CD8-positive, alpha-beta T cell (primary cell): ENCODE measurements at regions of chr19 and their contacts with region 1.

Region 1: GRCh38 chr19:52527134-52527955 is at the start of gene ZNF808:
- DNase-seq: peak; percentile 96 to 98 (median 97)
- ATAC-seq: peak; percentile 95
- H3K4me3 ChIP-seq: peak within 1 kb of the TSS; percentile 78 to 98
- H3K4me3 Mint-ChIP-seq: peak within 1 kb of the TSS; percentile 98
- H3K27ac ChIP-seq: peak within 1 kb of the TSS; percentile 89 to 97
- H3K27ac Mint-ChIP-seq: peak within 1 kb of the TSS; percentile 99
- H3K4me1 ChIP-seq: peaks cover 13% of the 10 kb centered on the region
- H3K4me1 Mint-ChIP-seq: peaks cover 29% of the 10 kb centered on the region
- H3K27me3 ChIP-seq: no peaks in the 10 kb centered on the region
- H3K27me3 Mint-ChIP-seq: no peaks in the 10 kb centered on the region
- CTCF ChIP-seq: peak; percentile 33
- total RNA-seq, gene ZNF808: 16.4 to 19.2 TPM

Region 2: DNA sequence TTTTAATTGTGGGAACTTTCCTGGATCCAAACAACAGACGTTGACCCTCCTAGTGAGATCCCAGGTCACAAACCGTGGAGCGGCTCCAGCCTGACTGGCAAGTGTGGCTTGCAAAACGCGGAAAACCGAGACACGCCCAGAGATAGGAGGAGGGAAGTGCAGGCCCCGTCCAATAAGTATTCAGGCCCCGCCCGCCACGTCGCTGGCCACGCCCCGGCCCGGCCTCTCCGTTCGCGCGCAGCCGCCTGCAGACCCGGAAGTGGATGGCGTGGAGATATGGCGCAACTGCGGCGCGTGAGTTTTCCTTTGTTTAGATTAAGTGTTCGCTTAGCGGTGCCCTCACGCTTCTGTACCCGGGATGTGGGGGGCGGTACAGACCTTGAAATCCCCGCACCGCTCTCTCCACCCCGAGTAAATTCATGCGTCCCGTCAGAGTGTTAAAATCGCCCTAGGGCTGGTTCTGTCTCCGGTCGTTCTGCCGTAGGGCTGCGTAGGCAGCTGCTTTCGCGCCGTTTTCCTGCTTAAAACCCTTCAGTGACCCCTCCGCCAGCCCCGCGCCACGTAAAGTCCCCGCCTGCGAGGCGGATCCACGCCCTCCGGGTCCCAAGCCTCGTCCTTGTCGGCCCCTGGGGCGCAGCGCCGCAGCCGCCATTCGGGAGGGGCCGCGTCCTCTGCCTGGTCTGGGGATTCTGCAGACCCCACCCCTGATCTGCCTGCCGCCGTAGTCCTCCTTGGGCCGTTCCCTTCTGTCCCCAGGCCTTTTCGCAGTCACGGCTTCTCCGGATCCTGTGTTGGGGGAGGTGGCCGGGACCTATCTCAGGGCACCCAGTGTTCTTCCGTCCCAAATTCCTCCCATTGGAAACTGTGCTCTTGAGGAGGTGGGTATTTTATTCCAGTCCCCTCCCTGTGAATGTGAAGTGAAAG is 257.7 kb before region 1 on chr19 and contains the start of gene ZNF766:
- CTCF ChIA-PET with region 1: no interaction called
- POLR2A ChIA-PET with region 1: no interaction called
- intact Hi-C with region 1: loop called (anchors 1 to 2 kb)
- DNase-seq: peak; percentile 95 to 98 (median 97)
- ATAC-seq: peak; percentile 98
- H3K4me3 ChIP-seq: peak within 1 kb of the TSS; percentile 89 to 95
- H3K4me3 Mint-ChIP-seq: peak within 1 kb of the TSS; percentile 98
- H3K27ac ChIP-seq: peak within 1 kb of the TSS; percentile 96
- H3K27ac Mint-ChIP-seq: peak within 1 kb of the TSS; percentile 98
- H3K4me1 ChIP-seq: peaks cover 13% of the 10 kb centered on the region
- H3K4me1 Mint-ChIP-seq: peaks cover 41% of the 10 kb centered on the region
- H3K27me3 ChIP-seq: no peaks in the 10 kb centered on the region
- H3K27me3 Mint-ChIP-seq: no peaks in the 10 kb centered on the region
- CTCF ChIP-seq: no peak
- total RNA-seq, gene ZNF766: 50.8 to 52.6 TPM

Region 3: GRCh38 chr19:52397310-52398080 is 129.8 kb before region 1 on chr19 and contains the start of gene ZNF528:
- CTCF ChIA-PET with region 1: no interaction called
- POLR2A ChIA-PET with region 1: no interaction called
- intact Hi-C with region 1: loop called in 1 of 2 experiments (anchors 1 kb)
- DNase-seq: peak; percentile 81 to 98 (median 95)
- ATAC-seq: peak; percentile 98
- H3K4me3 ChIP-seq: peak within 1 kb of the TSS; percentile 77 to 81
- H3K4me3 Mint-ChIP-seq: peak within 1 kb of the TSS; percentile 88
- H3K27ac ChIP-seq: peak within 1 kb of the TSS; percentile 67 to 83
- H3K27ac Mint-ChIP-seq: peak within 1 kb of the TSS; percentile 93
- H3K4me1 ChIP-seq: peaks cover 13% of the 10 kb centered on the region
- H3K4me1 Mint-ChIP-seq: peaks cover 25% of the 10 kb centered on the region
- H3K27me3 ChIP-seq: no peaks in the 10 kb centered on the region
- H3K27me3 Mint-ChIP-seq: no peaks in the 10 kb centered on the region
- CTCF ChIP-seq: no peak
- total RNA-seq, gene ZNF528: 12.2 to 15.3 TPM

Region 4: GRCh38 chr19:52601025-52601973 is 74.0 kb after region 1 on chr19:
- CTCF ChIA-PET with region 1: no interaction called
- POLR2A ChIA-PET with region 1: interaction called, 3 read pairs
- intact Hi-C with region 1: loop called (anchors 1 kb)
- DNase-seq: peak; percentile 86 to 96 (median 93)
- ATAC-seq: peak; percentile 99
- H3K4me3 ChIP-seq: peak overlapping the region; percentile 96 to 98
- H3K4me3 Mint-ChIP-seq: peak overlapping the region; percentile 97
- H3K27ac ChIP-seq: peak overlapping the region; percentile 71
- H3K27ac Mint-ChIP-seq: peak overlapping the region; percentile 90
- H3K4me1 ChIP-seq: peaks cover 13% of the 10 kb centered on the region
- H3K4me1 Mint-ChIP-seq: peaks cover 44% of the 10 kb centered on the region
- H3K27me3 ChIP-seq: no peaks in the 10 kb centered on the region
- H3K27me3 Mint-ChIP-seq: no peaks in the 10 kb centered on the region
- CTCF ChIP-seq: peak; percentile 49

Region 5: GRCh38 chr19:52897144-52897935 is 370.0 kb after region 1 on chr19 and contains the start of gene ZNF320:
- CTCF ChIA-PET with region 1: no interaction called
- POLR2A ChIA-PET with region 1: no interaction called
- intact Hi-C with region 1: loop called in 1 of 2 experiments (anchors 2 kb)
- DNase-seq: peak; percentile 80 to 96 (median 90)
- ATAC-seq: peak; percentile 100
- H3K4me3 ChIP-seq: peak within 1 kb of the TSS; percentile 74 to 77
- H3K4me3 Mint-ChIP-seq: peak within 1 kb of the TSS; percentile 93
- H3K27ac ChIP-seq: peak within 1 kb of the TSS; percentile 75
- H3K27ac Mint-ChIP-seq: peak within 1 kb of the TSS; percentile 92
- H3K4me1 ChIP-seq: peaks cover 13% of the 10 kb centered on the region
- H3K4me1 Mint-ChIP-seq: peaks cover 27% of the 10 kb centered on the region
- H3K27me3 ChIP-seq: no peaks in the 10 kb centered on the region
- H3K27me3 Mint-ChIP-seq: no peaks in the 10 kb centered on the region
- CTCF ChIP-seq: no peak
- total RNA-seq, gene ZNF320: 5.5 to 9.5 TPM

Region 6: DNA sequence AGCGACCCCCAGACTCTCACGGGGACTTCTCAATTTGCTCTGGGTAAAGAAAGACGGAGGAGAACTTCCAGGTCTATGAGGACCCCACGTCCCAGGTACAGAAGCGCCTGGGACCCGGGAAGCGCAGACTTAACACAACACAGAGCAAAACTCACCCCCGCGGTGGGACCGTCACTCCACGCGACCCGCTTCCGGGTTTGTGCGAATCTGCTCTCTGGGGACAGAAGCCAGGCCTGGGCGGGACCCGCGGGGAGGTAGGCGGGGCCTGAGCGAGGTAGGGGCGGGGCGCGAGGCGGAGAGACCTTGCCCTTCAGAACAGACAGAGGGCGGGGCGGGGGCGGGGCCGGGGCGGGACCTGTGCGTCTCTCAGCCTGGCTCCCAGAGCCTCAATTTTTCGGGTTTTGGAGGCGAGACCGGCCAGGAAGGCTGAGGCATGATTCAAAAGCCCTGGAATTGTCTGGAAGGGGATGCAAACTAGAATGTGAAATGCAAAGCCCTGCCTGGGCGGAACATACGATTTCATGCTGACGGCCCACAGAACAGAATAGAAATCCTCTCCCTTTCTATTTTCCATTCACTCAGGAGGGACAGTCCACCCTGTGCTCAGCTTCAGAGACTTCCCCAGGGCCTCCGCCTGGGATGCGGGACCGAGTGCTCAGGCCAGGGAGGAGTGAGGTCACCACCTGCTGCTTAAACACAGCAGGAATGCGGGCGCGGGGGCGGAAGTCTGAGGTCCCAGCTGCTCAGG is 415.2 kb after region 1 on chr19:
- CTCF ChIA-PET with region 1: no interaction called
- POLR2A ChIA-PET with region 1: no interaction called
- intact Hi-C with region 1: loop called in 1 of 2 experiments (anchors 5 kb)
- DNase-seq: peak; percentile 91 to 97 (median 95)
- ATAC-seq: peak; percentile 99
- H3K4me3 ChIP-seq: peak overlapping the region; percentile 88 to 91
- H3K4me3 Mint-ChIP-seq: peak overlapping the region; percentile 95
- H3K27ac ChIP-seq: peak overlapping the region; percentile 66 to 86
- H3K27ac Mint-ChIP-seq: peak overlapping the region; percentile 93
- H3K4me1 ChIP-seq: peaks cover 7% of the 10 kb centered on the region
- H3K4me1 Mint-ChIP-seq: peaks cover 28% of the 10 kb centered on the region
- H3K27me3 ChIP-seq: no peaks in the 10 kb centered on the region
- H3K27me3 Mint-ChIP-seq: no peaks in the 10 kb centered on the region
- CTCF ChIP-seq: no peak